ENCODE measurements at regions of chr5 and their contacts with region 1.

Region 1: GRCh38 chr5:157172403-157172802 is 6.3 kb upstream of the GARIN3 start:
- DNase-seq: peak; percentile 71 to 93 (median 80)
- H3K4me3 ChIP-seq: peak overlapping the region in 1 of 2 donors; percentile 20
- H3K4me3 Mint-ChIP-seq: peak overlapping the region; percentile 55 to 79 (median 74)
- H3K27ac ChIP-seq: peak overlapping the region; percentile 61
- H3K27ac Mint-ChIP-seq: peak overlapping the region; percentile 82 to 97 (median 94)
- H3K4me1 ChIP-seq: peaks cover 55% of the 10 kb centered on the region
- H3K4me1 Mint-ChIP-seq: peaks cover 42 to 82% (median 66%) of the 10 kb centered on the region in 4 donors
- H3K27me3 ChIP-seq: no peaks in the 10 kb centered on the region
- H3K27me3 Mint-ChIP-seq: no peaks in the 10 kb centered on the region

Region 2: GRCh38 chr5:157159209-157159751 is 13.1 kb before region 1 on chr5:
- CTCF ChIA-PET with region 1: interaction called, 7 read pairs
- POLR2A ChIA-PET with region 1: interaction called, 71 read pairs
- intact Hi-C with region 1: loop called (anchors 1 kb)
- DNase-seq: peak; percentile 74 to 87 (median 81)
- H3K4me3 ChIP-seq: peak overlapping the region in 1 of 2 donors; percentile 31
- H3K4me3 Mint-ChIP-seq: peak overlapping the region in 7 of 8 donors; percentile 51 to 75 (median 65)
- H3K27ac ChIP-seq: peak overlapping the region; percentile 88
- H3K27ac Mint-ChIP-seq: peak overlapping the region; percentile 91 to 99 (median 98)
- H3K4me1 ChIP-seq: peaks cover 74% of the 10 kb centered on the region
- H3K4me1 Mint-ChIP-seq: peaks cover 57 to 91% (median 73%) of the 10 kb centered on the region in 4 donors
- H3K27me3 ChIP-seq: no peaks in the 10 kb centered on the region
- H3K27me3 Mint-ChIP-seq: no peaks in the 10 kb centered on the region

Measured in CD4-positive, alpha-beta memory T cell (primary cell).